Panc1 (cell line): ENCODE measurements at regions of chr12 and their contacts with region 1.

Region 1: GRCh38 chr12:104930388-104931326 is 27.4 kb downstream of the SLC41A2 start:
- DNase-seq: no peak
- ATAC-seq: peak; percentile 84
- H3K4me3 ChIP-seq: no peak overlapping the region
- H3K27ac ChIP-seq: no peak overlapping the region
- H3K4me1 ChIP-seq: no peaks in the 10 kb centered on the region
- H3K27me3 ChIP-seq: no peaks in the 10 kb centered on the region
- CTCF ChIP-seq: no peak

Region 2: DNA sequence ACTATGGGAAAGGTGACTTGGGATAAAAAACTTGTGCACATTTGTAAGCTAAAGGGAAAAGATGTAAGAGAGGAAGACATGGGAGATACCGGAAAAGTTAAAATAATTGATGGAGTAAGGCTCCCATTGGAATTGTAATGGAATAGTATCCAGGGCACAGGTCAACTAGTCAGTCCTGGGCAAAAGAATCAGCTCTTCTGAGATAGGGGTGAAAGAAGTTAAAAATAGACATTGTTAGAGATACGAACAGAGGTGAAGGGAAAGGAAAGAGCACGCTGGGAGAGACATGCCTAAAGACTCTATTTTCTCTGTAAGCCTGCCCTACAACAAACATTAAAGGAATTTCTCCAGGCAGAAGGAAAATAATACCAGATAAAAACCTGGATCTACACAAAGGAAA is 74.1 kb before region 1 on chr12:
- CTCF ChIA-PET with region 1: no interaction called
- POLR2A ChIA-PET with region 1: interaction called, 12 read pairs
- in situ Hi-C with region 1: no loop called
- intact Hi-C with region 1: no loop called
- DNase-seq: no peak
- ATAC-seq: no peak
- H3K4me3 ChIP-seq: no peak overlapping the region
- H3K27ac ChIP-seq: no peak overlapping the region
- H3K4me1 ChIP-seq: no peaks in the 10 kb centered on the region
- H3K27me3 ChIP-seq: no peaks in the 10 kb centered on the region
- CTCF ChIP-seq: no peak

Region 3: GRCh38 chr12:105120551-105120950 is 189.9 kb after region 1 on chr12:
- CTCF ChIA-PET with region 1: no interaction called
- POLR2A ChIA-PET with region 1: no interaction called
- in situ Hi-C with region 1: no loop called
- intact Hi-C with region 1: no loop called
- DNase-seq: no peak
- ATAC-seq: no peak
- H3K4me3 ChIP-seq: no peak overlapping the region
- H3K27ac ChIP-seq: no peak overlapping the region
- H3K4me1 ChIP-seq: no peaks in the 10 kb centered on the region
- H3K27me3 ChIP-seq: no peaks in the 10 kb centered on the region
- CTCF ChIP-seq: no peak